OCI-LY7 (cell line): ENCODE measurements at regions of chr5 and their contacts with region 1.

Region 1: GRCh38 chr5:158287643-158288271 is 428.8 kb upstream of the CLINT1 start:
- DNase-seq: no peak
- H3K4me3 ChIP-seq: no peak overlapping the region
- H3K27ac ChIP-seq: no peak overlapping the region
- H3K4me1 ChIP-seq: peaks cover 22% of the 10 kb centered on the region
- CTCF ChIP-seq: no peak

Region 2: GRCh38 chr5:157924931-157925729 is 362.6 kb before region 1 on chr5:
- CTCF ChIA-PET with region 1: no interaction called
- POLR2A ChIA-PET with region 1: no interaction called
- intact Hi-C with region 1: no loop called
- DNase-seq: no peak
- H3K4me3 ChIP-seq: no peak overlapping the region
- H3K27ac ChIP-seq: no peak overlapping the region
- H3K4me1 ChIP-seq: peaks cover 2% of the 10 kb centered on the region
- CTCF ChIP-seq: no peak

Region 3: DNA sequence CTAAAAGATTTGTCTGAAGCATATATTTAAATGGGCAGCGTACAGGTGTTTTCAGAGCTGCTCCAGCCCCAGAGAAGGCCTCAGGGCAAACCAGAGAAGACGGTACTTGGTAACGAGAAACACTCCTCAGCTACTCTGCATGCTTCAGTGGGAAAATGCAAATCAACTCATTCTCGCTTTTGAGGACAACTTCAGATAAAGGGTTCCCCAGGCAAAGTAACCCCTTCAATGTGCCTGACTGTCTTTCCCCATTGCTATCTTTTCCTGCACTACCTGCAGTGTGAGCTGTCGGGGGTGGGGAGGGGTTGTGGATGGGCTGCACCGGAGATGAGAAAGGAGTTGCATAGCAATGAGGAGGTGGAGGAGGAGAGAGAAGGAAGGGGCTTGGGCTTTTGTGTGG is 89.1 kb before region 1 on chr5:
- CTCF ChIA-PET with region 1: no interaction called
- POLR2A ChIA-PET with region 1: interaction called, 6 read pairs
- intact Hi-C with region 1: loop called (anchors 1 kb)
- DNase-seq: peak; percentile 91
- H3K4me3 ChIP-seq: peak overlapping the region; percentile 44
- H3K27ac ChIP-seq: peak overlapping the region; percentile 87
- H3K4me1 ChIP-seq: peaks cover 78% of the 10 kb centered on the region
- CTCF ChIP-seq: no peak

Region 4: DNA sequence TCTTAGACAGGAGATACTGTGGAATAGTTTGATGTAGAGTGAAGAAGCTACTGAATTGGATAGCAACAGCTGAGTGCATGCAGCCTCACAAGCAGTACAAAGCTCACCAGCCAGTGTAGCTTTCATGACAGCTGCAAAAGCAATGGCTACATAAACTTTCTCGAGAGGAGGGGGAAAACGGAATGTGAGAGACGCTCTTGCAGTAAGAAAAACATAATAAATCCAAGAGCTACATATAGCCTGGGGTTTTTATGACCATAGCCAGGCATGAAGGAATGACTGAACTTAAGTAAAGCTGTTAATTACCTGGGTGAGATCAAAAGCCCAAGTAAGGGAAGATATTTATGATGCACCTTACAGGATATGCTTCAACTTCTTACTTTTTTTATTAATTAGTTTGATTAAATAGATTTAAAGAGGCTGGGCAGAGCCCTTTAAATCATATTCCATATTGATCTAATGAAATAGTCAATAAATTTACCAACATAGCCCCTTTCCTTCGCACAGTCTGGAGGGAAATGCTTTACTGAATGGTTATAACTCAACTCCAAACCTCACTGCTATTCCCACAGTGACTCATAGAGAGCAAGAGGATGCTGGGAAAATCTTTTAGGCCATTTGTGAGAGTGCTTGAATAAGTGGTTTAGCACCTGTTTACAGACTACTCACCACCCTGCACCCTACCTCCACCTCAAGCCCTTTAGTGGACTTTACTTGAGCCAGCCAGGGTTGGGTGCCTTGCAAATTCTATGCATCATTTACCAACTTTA is 21.6 kb before region 1 on chr5:
- CTCF ChIA-PET with region 1: no interaction called
- POLR2A ChIA-PET with region 1: interaction called, 10 read pairs
- intact Hi-C with region 1: no loop called
- DNase-seq: no peak
- H3K4me3 ChIP-seq: no peak overlapping the region
- H3K27ac ChIP-seq: no peak overlapping the region
- H3K4me1 ChIP-seq: peaks cover 18% of the 10 kb centered on the region
- CTCF ChIP-seq: no peak

Region 5: DNA sequence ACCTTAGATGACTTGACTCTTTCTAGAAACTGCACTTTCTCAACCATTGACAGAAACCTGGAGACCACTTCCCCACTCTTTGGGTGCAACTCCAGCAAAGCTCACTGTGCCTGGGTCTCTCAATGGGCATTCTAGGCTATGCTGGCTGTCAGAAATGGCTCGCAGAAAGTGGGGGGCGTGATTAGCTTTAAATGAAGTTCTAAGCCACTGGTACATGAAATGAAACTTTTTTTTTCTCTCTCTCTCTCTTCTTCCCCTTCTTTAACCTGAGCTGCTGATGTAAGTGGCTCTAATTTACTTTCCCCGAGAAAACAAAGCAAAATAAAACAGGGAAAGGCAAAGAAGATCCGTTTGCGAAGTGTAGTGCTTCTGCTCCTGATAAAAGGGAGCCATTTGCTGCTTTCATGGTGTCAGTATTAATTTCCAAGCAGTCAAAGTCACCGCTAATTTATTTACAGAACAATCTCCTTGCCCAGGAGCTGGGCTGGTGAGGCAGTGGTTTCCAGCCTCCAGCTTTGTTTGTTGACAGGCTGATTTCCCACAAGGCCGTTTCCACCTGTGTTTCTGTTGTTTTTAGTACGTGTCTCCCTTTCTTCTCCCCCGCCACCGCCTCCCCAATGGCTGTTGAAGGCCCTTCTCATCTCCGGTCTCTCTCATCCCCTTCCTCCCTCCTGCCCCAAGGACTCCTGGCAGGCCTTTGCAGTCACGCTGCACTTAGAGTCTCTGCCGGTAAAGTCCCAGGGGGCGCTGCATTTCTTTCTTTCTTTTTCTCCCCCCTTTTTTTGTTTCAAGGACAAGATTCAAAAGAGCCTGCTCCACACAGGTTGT is 389.1 kb after region 1 on chr5:
- CTCF ChIA-PET with region 1: no interaction called
- POLR2A ChIA-PET with region 1: interaction called, 3 read pairs
- intact Hi-C with region 1: loop called (anchors 5 kb)
- DNase-seq: peak; percentile 85
- H3K4me3 ChIP-seq: peak overlapping the region; percentile 48
- H3K27ac ChIP-seq: peak overlapping the region; percentile 73
- H3K4me1 ChIP-seq: peaks cover 30% of the 10 kb centered on the region
- CTCF ChIP-seq: peak; percentile 93

Region 6: GRCh38 chr5:158751961-158752655 is 464.4 kb after region 1 on chr5:
- CTCF ChIA-PET with region 1: no interaction called
- POLR2A ChIA-PET with region 1: no interaction called
- intact Hi-C with region 1: loop called (anchors 10 kb)
- DNase-seq: peak; percentile 91
- H3K4me3 ChIP-seq: peak overlapping the region; percentile 57
- H3K27ac ChIP-seq: peak overlapping the region; percentile 99
- H3K4me1 ChIP-seq: peaks cover 83% of the 10 kb centered on the region
- CTCF ChIP-seq: no peak